ENCODE measurements at regions of chr1 and their contacts with region 1.

Region 1: DNA sequence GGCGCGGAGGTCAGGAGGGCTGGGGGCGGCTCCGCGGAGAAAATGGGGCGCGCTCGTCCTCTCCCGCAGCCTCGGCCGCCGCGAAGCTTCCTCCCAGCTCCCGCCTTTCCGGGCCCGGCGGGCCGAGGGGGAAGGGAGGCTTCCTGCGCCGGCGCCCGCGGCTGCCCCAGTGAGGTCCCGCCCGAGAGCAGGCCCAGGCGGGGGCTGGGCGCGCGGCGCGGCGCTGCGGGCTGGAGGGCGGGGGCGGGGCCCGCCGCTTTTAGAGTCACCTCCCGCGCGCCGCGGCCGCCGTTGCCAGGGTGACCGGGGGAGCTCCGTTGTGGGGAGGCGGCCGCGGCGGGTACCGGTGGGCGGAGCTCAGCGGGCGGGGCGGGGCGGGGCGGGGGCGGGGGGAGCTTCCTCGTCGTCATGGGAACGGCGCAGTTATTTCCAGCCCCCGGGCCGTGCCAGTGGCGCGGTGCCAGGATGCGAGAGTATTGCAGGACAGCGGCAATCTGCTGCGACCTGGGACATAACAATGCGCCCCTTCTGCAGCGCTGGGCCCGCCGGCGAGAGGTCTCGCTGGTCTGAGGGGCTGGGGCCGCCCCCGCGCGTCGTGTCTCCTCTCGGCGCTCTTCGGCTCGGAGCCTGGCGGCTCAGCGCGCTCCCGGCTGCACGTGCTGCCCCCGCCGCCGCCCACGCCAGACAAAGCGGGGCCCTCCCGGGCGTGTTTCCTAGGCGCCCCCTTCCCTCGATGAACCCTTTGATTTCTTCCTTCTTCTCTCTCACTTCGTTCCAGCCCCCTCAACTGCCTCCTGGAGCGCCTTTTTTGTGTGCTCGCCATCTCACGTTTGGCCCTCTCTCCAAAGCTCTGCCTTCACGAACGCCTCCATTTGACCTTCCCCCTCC is 16.9 kb downstream of the IER5 start:
- DNase-seq: peak; percentile 94
- H3K4me3 Mint-ChIP-seq: peak overlapping the region; percentile 78
- H3K27ac Mint-ChIP-seq: peak overlapping the region; percentile 51
- H3K4me1 Mint-ChIP-seq: peaks cover 69% of the 10 kb centered on the region
- H3K27me3 Mint-ChIP-seq: peaks cover 35% of the 10 kb centered on the region

Region 2: GRCh38 chr1:181021811-181022434 is 83.5 kb before region 1 on chr1:
- CTCF ChIA-PET with region 1: interaction called, 3 read pairs
- POLR2A ChIA-PET with region 1: interaction called, 10 read pairs
- DNase-seq: peak; percentile 62
- H3K4me3 Mint-ChIP-seq: peak overlapping the region; percentile 95
- H3K27ac Mint-ChIP-seq: peak overlapping the region; percentile 89
- H3K4me1 Mint-ChIP-seq: peaks cover 48% of the 10 kb centered on the region
- H3K27me3 Mint-ChIP-seq: peaks cover 18% of the 10 kb centered on the region

Region 3: GRCh38 chr1:181117638-181118449 is 12.5 kb after region 1 on chr1:
- CTCF ChIA-PET with region 1: interaction called, 3 read pairs
- POLR2A ChIA-PET with region 1: interaction called, 16 read pairs
- DNase-seq: no peak
- H3K4me3 Mint-ChIP-seq: no peak overlapping the region
- H3K27ac Mint-ChIP-seq: no peak overlapping the region
- H3K4me1 Mint-ChIP-seq: peaks cover 8% of the 10 kb centered on the region
- H3K27me3 Mint-ChIP-seq: peaks cover 7% of the 10 kb centered on the region

Region 4: DNA sequence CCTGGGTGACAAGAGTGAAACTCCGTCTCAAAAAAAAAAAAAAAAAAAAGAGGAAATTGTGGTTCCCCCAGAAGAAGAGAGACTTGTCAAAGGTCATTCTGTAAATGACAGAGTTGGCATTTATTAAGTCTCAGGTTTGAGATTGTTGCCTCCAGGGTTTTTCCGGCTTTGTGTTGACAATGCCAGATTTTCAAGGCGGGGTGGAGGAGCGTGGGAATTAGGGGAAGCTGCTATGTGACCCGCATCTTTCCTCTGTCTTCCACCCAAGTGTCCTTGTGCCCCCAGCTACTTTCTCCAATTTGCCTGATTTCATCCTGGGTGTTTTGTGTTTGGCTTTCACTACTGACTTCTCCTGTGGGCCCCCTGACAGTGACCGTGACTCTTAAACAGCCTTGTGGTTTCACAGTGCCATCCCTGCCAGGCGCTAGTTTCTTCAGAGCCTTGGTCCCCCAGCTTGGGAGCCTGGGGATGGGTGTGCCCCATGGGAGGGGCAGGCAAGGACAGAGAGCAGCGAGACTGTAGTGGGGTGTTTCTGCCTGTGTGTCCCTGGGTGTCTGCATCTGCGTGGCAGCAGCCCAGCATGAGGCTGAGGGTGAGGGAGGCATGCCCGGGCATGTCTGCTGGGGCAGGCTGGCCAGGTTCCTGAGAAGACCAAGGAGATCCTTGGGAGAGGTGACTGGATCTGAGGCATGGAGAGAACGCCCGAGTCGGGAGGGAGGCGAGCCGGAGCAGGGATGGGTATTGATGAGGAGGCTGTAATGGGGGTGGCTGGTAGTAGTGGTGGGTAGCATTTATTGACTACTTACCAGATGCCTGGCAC is 29.4 kb after region 1 on chr1:
- CTCF ChIA-PET with region 1: interaction called, 16 read pairs
- POLR2A ChIA-PET with region 1: interaction called, 50 read pairs
- DNase-seq: peak; percentile 42
- H3K4me3 Mint-ChIP-seq: peak overlapping the region; percentile 25
- H3K27ac Mint-ChIP-seq: peak overlapping the region; percentile 90
- H3K4me1 Mint-ChIP-seq: peaks cover 74% of the 10 kb centered on the region
- H3K27me3 Mint-ChIP-seq: no peaks in the 10 kb centered on the region